Ovary (tissue), 10 donors: ENCODE measurements at regions of chr20 and their contacts with region 1.

Region 1: GRCh38 chr20:31859998-31860709 is 10.2 kb downstream of the DUSP15 start:
- DNase-seq: peak in 2 of 5 donors; percentile 31 to 33
- H3K4me3 ChIP-seq: no peak overlapping the region
- H3K27ac ChIP-seq: no peak overlapping the region
- H3K4me1 ChIP-seq: peaks cover 3% of the 10 kb centered on the region
- H3K27me3 ChIP-seq: no peaks in the 10 kb centered on the region
- CTCF ChIP-seq: no peak
- EP300 ChIP-seq: no peak
- POLR2A ChIP-seq: no peak

Region 2: GRCh38 chr20:31951530-31952453 is 91.6 kb after region 1 on chr20 and contains the start of gene PDRG1:
- intact Hi-C with region 1: loop called in 2 of 4 experiments (anchors 10 kb)
- DNase-seq: peak; percentile 93 to 98 (median 96)
- H3K4me3 ChIP-seq: peak within 1 kb of the TSS; percentile 64
- H3K27ac ChIP-seq: peak within 1 kb of the TSS in 1 of 2 donors; percentile 14
- H3K4me1 ChIP-seq: peaks cover 8% of the 10 kb centered on the region
- H3K27me3 ChIP-seq: no peaks in the 10 kb centered on the region
- CTCF ChIP-seq: peak; percentile 86 to 94 (median 88)
- EP300 ChIP-seq: no peak
- POLR2A ChIP-seq: peak; percentile 36
- total RNA-seq, gene PDRG1: 6.4 to 12.1 (median 9.4) TPM